CD8-positive, alpha-beta T cell (primary cell): ENCODE measurements at regions of chr14 and their contacts with region 1.

Region 1: GRCh38 chr14:99899578-99900178 is 106.5 kb downstream of the EML1 start:
- DNase-seq: peak in 2 of 9 experiments; percentile 13 to 27
- ATAC-seq: no peak
- H3K4me3 ChIP-seq: no peak overlapping the region
- H3K4me3 Mint-ChIP-seq: no peak overlapping the region
- H3K27ac ChIP-seq: no peak overlapping the region
- H3K27ac Mint-ChIP-seq: no peak overlapping the region
- H3K4me1 ChIP-seq: no peaks in the 10 kb centered on the region
- H3K4me1 Mint-ChIP-seq: no peaks in the 10 kb centered on the region
- H3K27me3 ChIP-seq: no peaks in the 10 kb centered on the region
- H3K27me3 Mint-ChIP-seq: peaks cover 8% of the 10 kb centered on the region
- CTCF ChIP-seq: peak; percentile 78

Region 2: GRCh38 chr14:99884834-99885648 is 14.6 kb before region 1 on chr14:
- CTCF ChIA-PET with region 1: interaction called, 17 read pairs
- POLR2A ChIA-PET with region 1: no interaction called
- intact Hi-C with region 1: no loop called
- DNase-seq: peak in 4 of 9 experiments; percentile 11 to 74 (median 40)
- ATAC-seq: peak; percentile 51
- H3K4me3 ChIP-seq: no peak overlapping the region
- H3K4me3 Mint-ChIP-seq: no peak overlapping the region
- H3K27ac ChIP-seq: no peak overlapping the region
- H3K27ac Mint-ChIP-seq: no peak overlapping the region
- H3K4me1 ChIP-seq: no peaks in the 10 kb centered on the region
- H3K4me1 Mint-ChIP-seq: no peaks in the 10 kb centered on the region
- H3K27me3 ChIP-seq: peaks cover 0 to 3% of the 10 kb centered on the region in 2 experiments
- H3K27me3 Mint-ChIP-seq: peaks cover 8% of the 10 kb centered on the region
- CTCF ChIP-seq: peak; percentile 93

Region 3: GRCh38 chr14:99915305-99916090 is 15.8 kb after region 1 on chr14:
- CTCF ChIA-PET with region 1: interaction called, 25 read pairs
- POLR2A ChIA-PET with region 1: no interaction called
- intact Hi-C with region 1: no loop called
- DNase-seq: no peak
- ATAC-seq: no peak
- H3K4me3 ChIP-seq: no peak overlapping the region
- H3K4me3 Mint-ChIP-seq: no peak overlapping the region
- H3K27ac ChIP-seq: no peak overlapping the region
- H3K27ac Mint-ChIP-seq: no peak overlapping the region
- H3K4me1 ChIP-seq: no peaks in the 10 kb centered on the region
- H3K4me1 Mint-ChIP-seq: no peaks in the 10 kb centered on the region
- H3K27me3 ChIP-seq: peaks cover 0 to 3% of the 10 kb centered on the region in 2 experiments
- H3K27me3 Mint-ChIP-seq: peaks cover 12% of the 10 kb centered on the region
- CTCF ChIP-seq: no peak

Region 4: GRCh38 chr14:99955826-99956455 is 56.3 kb after region 1 on chr14:
- CTCF ChIA-PET with region 1: no interaction called
- POLR2A ChIA-PET with region 1: no interaction called
- intact Hi-C with region 1: no loop called
- DNase-seq: no peak
- ATAC-seq: no peak
- H3K4me3 ChIP-seq: no peak overlapping the region
- H3K4me3 Mint-ChIP-seq: no peak overlapping the region
- H3K27ac ChIP-seq: no peak overlapping the region
- H3K27ac Mint-ChIP-seq: no peak overlapping the region
- H3K4me1 ChIP-seq: no peaks in the 10 kb centered on the region
- H3K4me1 Mint-ChIP-seq: no peaks in the 10 kb centered on the region
- H3K27me3 ChIP-seq: peaks cover 0 to 9% of the 10 kb centered on the region in 2 experiments
- H3K27me3 Mint-ChIP-seq: peaks cover 6% of the 10 kb centered on the region
- CTCF ChIP-seq: no peak

Region 5: DNA sequence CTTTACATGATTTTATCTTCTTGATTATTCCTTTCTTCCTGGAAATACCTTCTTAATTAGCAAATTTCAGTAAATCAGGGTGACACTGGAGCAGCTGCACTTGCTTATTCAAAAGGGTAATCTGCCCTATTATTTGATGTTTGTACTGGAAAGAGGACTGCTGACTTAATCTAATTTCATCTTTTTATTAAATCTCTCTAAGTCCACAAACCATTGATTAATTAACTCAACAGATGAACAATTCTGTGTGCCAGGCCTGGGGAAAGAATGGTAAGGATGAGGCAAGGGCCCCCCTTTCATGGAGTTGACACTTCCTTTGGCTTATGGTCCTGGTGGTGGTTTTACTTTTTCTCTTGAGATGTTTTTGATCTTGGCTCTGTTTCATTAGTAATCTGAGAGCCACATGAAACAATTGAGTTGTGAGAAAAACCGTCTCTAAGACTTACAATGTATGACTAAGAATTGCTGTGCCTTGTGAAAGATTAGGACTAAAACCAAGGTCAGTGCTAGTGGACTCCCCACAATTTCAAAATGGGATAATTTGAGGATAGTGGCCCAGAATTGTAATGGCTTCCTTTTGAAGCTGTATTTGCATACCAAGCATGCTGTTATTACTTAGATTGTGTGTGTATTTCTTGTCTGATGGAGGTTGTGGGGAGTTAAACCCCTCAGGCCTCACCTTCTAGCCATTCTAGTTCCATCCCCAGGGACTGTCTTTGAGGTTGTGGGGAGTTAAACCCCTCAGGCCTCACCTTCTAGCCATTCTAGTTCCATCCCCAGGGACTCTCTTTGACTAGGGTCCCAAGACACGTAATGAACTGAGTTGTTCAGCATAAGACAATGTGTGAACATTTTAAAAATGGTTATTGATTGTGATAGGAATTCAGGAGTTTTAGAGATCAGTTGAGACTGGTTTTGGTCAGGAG is 113.0 kb after region 1 on chr14:
- CTCF ChIA-PET with region 1: no interaction called
- POLR2A ChIA-PET with region 1: no interaction called
- intact Hi-C with region 1: no loop called
- DNase-seq: no peak
- ATAC-seq: no peak
- H3K4me3 ChIP-seq: no peak overlapping the region
- H3K4me3 Mint-ChIP-seq: no peak overlapping the region
- H3K27ac ChIP-seq: no peak overlapping the region
- H3K27ac Mint-ChIP-seq: no peak overlapping the region
- H3K4me1 ChIP-seq: no peaks in the 10 kb centered on the region
- H3K4me1 Mint-ChIP-seq: peaks cover 10% of the 10 kb centered on the region
- H3K27me3 ChIP-seq: no peaks in the 10 kb centered on the region
- H3K27me3 Mint-ChIP-seq: no peaks in the 10 kb centered on the region
- CTCF ChIP-seq: no peak